Activated T-helper 2 cell treated with anti-CD3 and anti-CD28 coated beads, Interferon-gamma antibody, Interleukin-2, Interleukin-4, amounts not matched to agents 10 μg/mL and 5 μg/mL and 100 μg/mL, durations not matched to agents 14 hours and 24 hours and 36 hours (primary cell): ENCODE measurements at regions of chr6 and their contacts with region 1.

Region 1: GRCh38 chr6:79233611-79234149 is 802 bp downstream of the HMGN3 start:
- DNase-seq: peak; percentile 73
- H3K4me3 Mint-ChIP-seq: peak overlapping the region; percentile 99
- H3K27ac Mint-ChIP-seq: peak overlapping the region; percentile 96
- H3K4me1 Mint-ChIP-seq: peaks cover 22% of the 10 kb centered on the region
- H3K27me3 Mint-ChIP-seq: no peaks in the 10 kb centered on the region

Region 2: GRCh38 chr6:79009819-79010218 is 223.9 kb before region 1 on chr6:
- intact Hi-C with region 1: loop called (anchors 5 kb)
- DNase-seq: no peak
- H3K4me3 Mint-ChIP-seq: no peak overlapping the region
- H3K27ac Mint-ChIP-seq: no peak overlapping the region
- H3K4me1 Mint-ChIP-seq: peaks cover 18% of the 10 kb centered on the region
- H3K27me3 Mint-ChIP-seq: no peaks in the 10 kb centered on the region

Region 3: GRCh38 chr6:79335133-79335674 is 101.5 kb after region 1 on chr6:
- intact Hi-C with region 1: loop called (anchors 1 kb)
- DNase-seq: no peak
- H3K4me3 Mint-ChIP-seq: no peak overlapping the region
- H3K27ac Mint-ChIP-seq: no peak overlapping the region
- H3K4me1 Mint-ChIP-seq: peaks cover 21% of the 10 kb centered on the region
- H3K27me3 Mint-ChIP-seq: peaks cover 2% of the 10 kb centered on the region

Region 4: DNA sequence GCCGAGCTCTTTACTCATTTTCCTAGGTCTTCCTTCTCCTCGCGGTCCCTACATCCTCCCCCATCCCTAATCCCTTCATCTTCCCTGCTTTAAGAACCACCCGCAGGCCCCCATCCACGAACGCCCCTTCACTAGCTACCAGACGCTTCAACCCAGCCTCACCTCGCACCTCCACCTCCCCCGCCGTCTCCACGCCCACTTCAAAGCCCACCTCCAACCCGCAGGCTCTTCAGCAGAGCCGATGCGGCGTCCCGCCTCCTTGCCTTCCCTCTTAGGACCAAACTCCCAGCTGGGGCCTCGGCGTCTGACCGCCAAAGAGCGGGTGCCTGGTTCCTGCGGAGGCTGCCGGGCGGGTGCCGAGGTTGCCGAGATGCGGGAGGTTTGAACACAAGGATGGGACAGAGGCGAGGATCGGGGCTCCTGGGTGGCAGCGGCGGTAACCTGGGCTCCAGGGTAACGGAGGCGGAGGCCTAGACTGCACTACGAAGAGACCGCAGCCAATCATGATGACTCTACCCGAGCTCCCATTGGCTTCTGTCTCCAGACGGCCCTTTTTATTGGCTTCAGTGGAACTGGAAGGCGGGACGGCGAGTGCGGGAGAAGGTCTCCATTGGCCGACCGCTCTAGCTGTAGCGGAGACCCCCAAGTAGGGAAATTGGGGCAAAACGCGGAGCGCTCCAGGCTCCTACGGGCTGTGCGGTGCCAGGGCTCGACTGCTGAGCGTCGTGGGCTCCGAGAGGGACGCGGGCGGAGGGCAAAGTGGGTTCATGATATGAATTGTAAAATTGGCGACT is 303.5 kb after region 1 on chr6 and contains the start of gene LCA5:
- intact Hi-C with region 1: loop called (anchors 5 kb)
- DNase-seq: peak; percentile 82
- H3K4me3 Mint-ChIP-seq: no peak within 1 kb of the TSS
- H3K27ac Mint-ChIP-seq: no peak within 1 kb of the TSS
- H3K4me1 Mint-ChIP-seq: no peaks in the 10 kb centered on the region
- H3K27me3 Mint-ChIP-seq: peaks cover 28% of the 10 kb centered on the region
- total RNA-seq, gene LCA5: 0.09 and 0.18 TPM in 2 replicates